ENCODE measurements at regions of chr1 and their contacts with region 1.

Region 1: GRCh38 chr1:85580872-85581801 is 576 bp downstream of the CCN1 start:
- H3K4me3 ChIP-seq: peak overlapping the region; percentile 98
- H3K27ac ChIP-seq: peak overlapping the region; percentile 87
- H3K4me1 ChIP-seq: peaks cover 16% of the 10 kb centered on the region
- CTCF ChIP-seq: peak; percentile 96

Region 2: DNA sequence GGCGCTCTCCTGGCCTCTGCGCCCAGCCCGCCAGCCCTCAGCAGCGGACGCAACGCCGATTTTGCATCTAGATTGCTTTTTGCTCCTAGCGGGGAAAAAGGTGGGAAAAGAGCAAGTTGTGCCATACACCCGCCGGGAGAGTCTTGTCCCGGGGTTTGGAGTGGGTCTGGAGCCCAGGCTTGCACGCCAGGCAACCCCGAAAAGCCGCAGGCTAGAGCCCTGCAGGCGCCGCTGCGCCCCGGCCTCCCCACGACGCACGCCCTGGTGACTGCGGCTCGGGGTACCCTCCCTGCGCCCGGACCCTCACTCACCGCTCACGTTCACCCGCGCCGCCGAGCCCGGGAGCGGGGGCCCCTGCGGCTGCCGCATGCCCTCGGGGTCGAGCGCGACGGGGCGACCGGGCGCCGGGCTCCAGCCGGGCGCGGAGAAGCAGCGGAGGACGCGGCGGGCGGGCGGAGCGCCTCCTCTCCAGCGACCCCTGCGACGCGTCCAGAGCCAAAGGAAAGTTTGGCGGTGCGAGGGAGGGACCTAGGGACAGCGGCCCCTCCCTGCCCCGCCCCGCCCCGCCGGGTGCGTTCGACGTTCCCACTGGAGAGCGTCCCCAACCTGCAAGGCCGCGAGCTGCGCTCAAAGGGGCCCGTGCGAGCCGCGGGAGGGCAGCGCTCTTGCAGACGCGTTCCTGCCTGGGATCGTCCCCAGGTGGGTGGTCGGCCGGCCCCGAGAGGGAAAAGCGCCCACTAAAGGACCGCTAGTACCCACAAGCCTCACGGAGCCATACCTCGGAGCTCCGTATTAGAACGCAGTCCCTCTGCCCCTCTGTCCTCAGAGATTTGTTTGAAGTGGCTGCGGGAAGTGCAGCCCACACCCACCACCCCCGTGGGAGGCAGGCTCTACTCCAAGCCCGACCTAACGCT is 688.2 kb before region 1 on chr1 and contains the start of gene LPAR3:
- CTCF ChIA-PET with region 1: no interaction called
- POLR2A ChIA-PET with region 1: no interaction called
- H3K4me3 ChIP-seq: peak within 1 kb of the TSS; percentile 46
- H3K27ac ChIP-seq: peak within 1 kb of the TSS; percentile 19; the same call in 1 of the 2 replicates
- H3K4me1 ChIP-seq: no peaks in the 10 kb centered on the region
- CTCF ChIP-seq: peak; percentile 78

Region 3: GRCh38 chr1:85214657-85215056 is 366.5 kb before region 1 on chr1:
- CTCF ChIA-PET with region 1: no interaction called
- POLR2A ChIA-PET with region 1: no interaction called
- H3K4me3 ChIP-seq: no peak overlapping the region
- H3K27ac ChIP-seq: no peak overlapping the region
- H3K4me1 ChIP-seq: no peaks in the 10 kb centered on the region
- CTCF ChIP-seq: no peak

Region 4: DNA sequence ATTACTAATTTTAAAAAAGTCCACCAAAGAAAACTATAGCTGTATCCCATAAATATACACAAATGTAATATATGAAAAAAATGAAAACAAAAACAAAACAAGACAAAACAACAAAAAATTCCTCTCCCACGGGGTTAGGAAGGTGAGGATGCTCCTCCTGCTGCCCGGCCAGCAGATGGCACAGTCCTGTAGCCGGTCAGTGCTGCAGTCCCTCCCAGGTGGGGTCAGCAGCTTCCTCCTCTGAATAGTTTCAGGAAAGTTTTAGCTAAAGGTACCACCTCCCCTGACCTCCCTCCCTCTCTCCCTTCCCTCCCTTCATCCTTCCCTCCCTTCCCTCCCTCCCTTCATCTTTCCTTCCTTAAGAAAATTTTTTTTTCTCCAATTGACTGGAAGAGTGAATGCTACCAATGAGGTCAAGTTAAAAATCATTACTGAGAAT is 236.9 kb before region 1 on chr1:
- CTCF ChIA-PET with region 1: interaction called, 9 read pairs
- POLR2A ChIA-PET with region 1: interaction called, 11 read pairs
- H3K4me3 ChIP-seq: no peak overlapping the region
- H3K27ac ChIP-seq: no peak overlapping the region
- H3K4me1 ChIP-seq: peaks cover 21% of the 10 kb centered on the region
- CTCF ChIP-seq: peak; percentile 78

Region 5: DNA sequence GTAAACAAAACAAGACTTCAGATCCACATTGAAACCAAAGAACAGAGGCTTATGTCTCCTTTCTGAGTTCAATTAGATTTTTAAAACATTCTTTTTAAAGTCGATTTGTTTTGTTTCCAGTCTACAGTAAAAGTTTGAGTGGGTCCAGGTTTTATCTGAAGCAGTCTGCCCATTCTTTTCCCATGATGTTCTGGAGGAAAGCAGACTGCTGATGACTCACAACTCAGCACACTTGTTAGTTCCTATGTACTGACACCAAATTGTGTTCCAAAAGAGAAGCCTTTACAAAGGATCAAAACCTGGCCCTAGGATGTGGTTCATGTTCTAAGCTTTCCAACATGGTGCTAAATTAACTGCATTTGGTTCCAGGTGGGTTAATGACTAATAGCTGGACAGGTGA is 12.0 kb before region 1 on chr1:
- CTCF ChIA-PET with region 1: interaction called, 4 read pairs
- POLR2A ChIA-PET with region 1: interaction called, 15 read pairs
- H3K4me3 ChIP-seq: no peak overlapping the region
- H3K27ac ChIP-seq: no peak overlapping the region
- H3K4me1 ChIP-seq: no peaks in the 10 kb centered on the region
- CTCF ChIP-seq: no peak

Region 6: GRCh38 chr1:85607126-85607912 is 26.2 kb after region 1 on chr1:
- CTCF ChIA-PET with region 1: interaction called, 39 read pairs
- POLR2A ChIA-PET with region 1: interaction called, 120 read pairs
- H3K4me3 ChIP-seq: no peak overlapping the region
- H3K27ac ChIP-seq: no peak overlapping the region
- H3K4me1 ChIP-seq: no peaks in the 10 kb centered on the region
- CTCF ChIP-seq: no peak

Region 7: DNA sequence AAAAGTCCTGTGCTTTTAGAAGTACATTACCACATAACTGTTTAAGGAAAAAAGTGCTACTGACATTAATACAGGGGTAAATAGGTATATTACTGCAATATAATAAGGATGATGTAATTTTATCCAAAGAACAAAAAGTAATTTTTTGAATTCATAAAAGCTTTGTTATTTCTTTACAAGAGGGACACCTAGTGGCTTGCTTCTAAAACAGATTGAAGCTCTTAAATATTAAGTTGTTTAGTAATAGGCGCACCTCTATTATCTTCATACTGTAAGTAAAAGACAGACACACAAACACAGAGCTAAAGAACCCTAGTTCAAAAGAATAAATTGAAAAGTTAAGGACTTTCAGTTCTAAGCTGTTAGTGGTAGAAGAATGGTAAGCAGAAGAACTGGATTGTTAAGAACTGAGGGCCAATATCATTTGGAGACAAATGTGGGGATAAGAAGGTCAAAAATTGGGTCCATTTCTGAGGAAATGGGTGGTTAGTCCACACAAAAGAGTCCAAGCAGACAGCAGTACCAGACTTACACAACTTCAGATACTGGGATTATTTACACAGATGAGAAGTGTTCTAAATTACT is 111.7 kb after region 1 on chr1:
- CTCF ChIA-PET with region 1: interaction called, 25 read pairs
- POLR2A ChIA-PET with region 1: interaction called, 30 read pairs
- H3K4me3 ChIP-seq: no peak overlapping the region
- H3K27ac ChIP-seq: no peak overlapping the region
- H3K4me1 ChIP-seq: no peaks in the 10 kb centered on the region
- CTCF ChIP-seq: 0 out of 2 replicates have a peak, but pooled peaks have one; percentile 8

Region 8: DNA sequence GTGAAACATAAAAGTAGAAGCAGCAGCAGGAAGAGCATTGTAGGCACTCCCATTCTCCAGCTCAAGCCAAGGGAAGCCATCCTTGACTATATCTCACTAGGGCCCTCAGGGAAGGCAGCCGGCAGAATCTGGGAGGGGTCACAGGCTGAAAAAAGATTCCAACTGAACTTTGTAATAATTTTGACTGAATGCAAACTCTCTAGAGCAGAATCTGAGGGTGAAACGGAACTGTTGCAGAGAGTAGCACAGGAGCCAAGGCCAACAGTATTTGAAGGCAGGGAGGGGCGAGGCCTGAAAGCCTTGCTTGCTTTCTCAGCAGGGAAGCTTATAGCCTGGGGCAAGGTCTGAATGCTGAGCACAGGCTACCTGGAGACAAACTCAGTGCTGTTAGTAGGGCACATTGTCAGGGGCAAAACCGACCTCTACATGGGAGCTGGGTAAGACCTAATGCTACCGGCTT is 394.8 kb after region 1 on chr1:
- CTCF ChIA-PET with region 1: no interaction called
- POLR2A ChIA-PET with region 1: no interaction called
- H3K4me3 ChIP-seq: no peak overlapping the region
- H3K27ac ChIP-seq: no peak overlapping the region
- H3K4me1 ChIP-seq: no peaks in the 10 kb centered on the region
- CTCF ChIP-seq: no peak